ENCODE measurements at regions of chr1 and their contacts with region 1.

Region 1: GRCh38 chr1:24536391-24536840 is 19.5 kb upstream of the NCMAP start:
- DNase-seq: peak; percentile 71
- ATAC-seq: no peak
- H3K4me3 ChIP-seq: no peak overlapping the region
- H3K27ac ChIP-seq: no peak overlapping the region
- H3K4me1 ChIP-seq: peaks cover 2% of the 10 kb centered on the region
- H3K27me3 ChIP-seq: no peaks in the 10 kb centered on the region
- CTCF ChIP-seq: no peak
- POLR2A ChIP-seq: no peak
- RAD21 ChIP-seq: no peak

Region 2: GRCh38 chr1:24489674-24490073 is 46.7 kb before region 1 on chr1:
- CTCF ChIA-PET with region 1: no interaction called
- POLR2A ChIA-PET with region 1: no interaction called
- dilution Hi-C with region 1: no loop called
- in situ Hi-C with region 1: no loop called
- intact Hi-C with region 1: loop called (anchors 1 kb)
- DNase-seq: no peak
- ATAC-seq: no peak
- H3K4me3 ChIP-seq: no peak overlapping the region
- H3K27ac ChIP-seq: no peak overlapping the region
- H3K4me1 ChIP-seq: no peaks in the 10 kb centered on the region
- H3K27me3 ChIP-seq: peaks cover 13% of the 10 kb centered on the region
- CTCF ChIP-seq: no peak
- POLR2A ChIP-seq: no peak
- RAD21 ChIP-seq: no peak

Region 3: DNA sequence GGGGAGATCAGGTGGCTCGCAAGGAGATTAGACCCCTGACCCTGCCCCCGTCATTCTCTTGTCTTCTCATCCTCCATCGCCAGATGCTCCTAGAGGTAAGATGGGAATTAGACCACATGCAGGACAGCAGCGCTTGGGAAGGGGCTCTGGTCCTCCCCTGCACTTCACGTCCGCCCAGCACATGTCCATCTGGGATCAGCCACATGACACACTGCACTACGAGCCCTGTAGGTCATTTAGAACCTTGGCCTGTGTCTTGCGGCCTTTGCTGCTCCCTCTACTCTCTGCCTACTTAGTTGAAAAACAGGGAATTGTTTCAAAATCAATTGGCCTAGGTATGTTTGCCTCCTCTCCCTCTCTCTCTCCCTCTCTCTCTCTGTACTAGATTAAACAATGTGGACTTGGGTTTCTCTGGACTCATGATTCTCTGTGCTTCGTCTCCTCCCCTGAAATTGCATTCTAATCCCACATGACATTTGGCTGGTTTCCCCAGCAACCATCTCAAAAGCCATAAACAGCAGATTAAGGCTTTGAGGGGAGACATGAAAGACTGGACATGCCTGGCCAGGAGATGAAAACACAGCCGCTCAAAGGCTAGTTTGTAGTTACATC is 15.7 kb after region 1 on chr1:
- CTCF ChIA-PET with region 1: no interaction called
- POLR2A ChIA-PET with region 1: no interaction called
- dilution Hi-C with region 1: no loop called
- in situ Hi-C with region 1: no loop called
- intact Hi-C with region 1: no loop called
- DNase-seq: peak; percentile 32
- ATAC-seq: 0 out of 2 replicates have a peak, but pooled peaks have one; percentile 35
- H3K4me3 ChIP-seq: no peak overlapping the region
- H3K27ac ChIP-seq: no peak overlapping the region
- H3K4me1 ChIP-seq: no peaks in the 10 kb centered on the region; the same call in 1 of the 2 replicates
- H3K27me3 ChIP-seq: peaks cover 55% of the 10 kb centered on the region
- CTCF ChIP-seq: no peak
- POLR2A ChIP-seq: no peak
- RAD21 ChIP-seq: no peak